ENCODE measurements at regions of chr12 and their contacts with region 1.

Region 1: GRCh38 chr12:53746592-53747092 is 5.1 kb downstream of the CISTR start:
- DNase-seq: peak; percentile 78
- H3K4me3 Mint-ChIP-seq: no peak overlapping the region
- H3K27ac Mint-ChIP-seq: no peak overlapping the region
- H3K4me1 Mint-ChIP-seq: peaks cover 12% of the 10 kb centered on the region
- H3K27me3 Mint-ChIP-seq: peaks cover 40% of the 10 kb centered on the region

Region 2: DNA sequence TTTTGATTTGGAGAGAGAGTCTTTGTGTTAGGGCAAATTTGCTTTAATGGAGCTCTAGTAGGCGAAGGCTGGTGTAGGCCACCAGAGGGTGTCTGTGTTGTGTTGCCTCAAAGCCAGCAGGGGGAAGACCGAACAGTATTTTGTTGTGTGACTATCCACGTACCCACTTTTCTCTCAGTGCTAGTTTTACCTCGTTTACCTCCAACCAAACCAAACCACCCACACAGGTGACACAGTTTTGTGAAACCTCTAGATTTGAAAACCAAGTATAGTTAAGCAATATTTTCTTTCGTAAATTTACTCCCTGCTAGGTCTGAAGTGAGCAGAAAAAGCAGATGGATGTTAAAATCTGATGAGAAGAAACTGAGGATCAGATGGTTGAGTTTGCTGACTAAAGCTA is 203.1 kb before region 1 on chr12:
- intact Hi-C with region 1: loop called (anchors 1 kb)
- DNase-seq: peak; percentile 38
- H3K4me3 Mint-ChIP-seq: no peak overlapping the region
- H3K27ac Mint-ChIP-seq: peak overlapping the region; percentile 75
- H3K4me1 Mint-ChIP-seq: peaks cover 13% of the 10 kb centered on the region
- H3K27me3 Mint-ChIP-seq: no peaks in the 10 kb centered on the region

Region 3: GRCh38 chr12:53701518-53702260 is 45.0 kb before region 1 on chr12:
- intact Hi-C with region 1: loop called (anchors 1 kb)
- DNase-seq: peak; percentile 42
- H3K4me3 Mint-ChIP-seq: no peak overlapping the region
- H3K27ac Mint-ChIP-seq: no peak overlapping the region
- H3K4me1 Mint-ChIP-seq: peaks cover 12% of the 10 kb centered on the region
- H3K27me3 Mint-ChIP-seq: peaks cover 74% of the 10 kb centered on the region

Region 4: GRCh38 chr12:53757095-53757770 is 10.6 kb after region 1 on chr12:
- intact Hi-C with region 1: loop called (anchors 1 kb)
- DNase-seq: peak; percentile 71
- H3K4me3 Mint-ChIP-seq: peak overlapping the region; percentile 43
- H3K27ac Mint-ChIP-seq: peak overlapping the region; percentile 56
- H3K4me1 Mint-ChIP-seq: peaks cover 16% of the 10 kb centered on the region
- H3K27me3 Mint-ChIP-seq: peaks cover 36% of the 10 kb centered on the region